Thyroid gland (tissue), 4 donors: ENCODE measurements at regions of chr7 and their contacts with region 1.

Region 1: DNA sequence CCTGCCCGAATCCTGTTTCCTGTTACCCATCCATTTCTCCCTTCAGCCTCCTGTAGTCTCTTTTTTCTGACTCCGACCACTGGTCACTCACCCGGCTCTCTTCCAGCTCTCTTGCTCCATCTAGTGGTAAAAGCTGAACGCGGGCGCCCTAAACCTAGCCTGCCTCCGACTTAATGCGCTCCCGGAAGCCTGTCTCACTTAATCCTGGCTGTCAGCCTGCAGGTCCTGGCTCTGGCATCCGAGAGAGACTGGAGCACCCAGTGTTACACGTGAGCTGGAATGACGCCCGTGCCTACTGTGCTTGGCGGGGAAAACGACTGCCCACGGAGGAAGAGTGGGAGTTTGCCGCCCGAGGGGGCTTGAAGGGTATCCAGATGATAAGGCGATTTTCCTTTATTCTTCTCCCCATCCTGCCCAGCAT is 10.3 kb downstream of the SUMF2 start:
- DNase-seq: peak; percentile 97
- H3K4me3 ChIP-seq: no peak overlapping the region
- H3K27ac ChIP-seq: peak overlapping the region in 2 of 3 donors; percentile 10 to 40
- H3K4me1 ChIP-seq: peaks cover 5 to 8% of the 10 kb centered on the region in 2 donors
- H3K27me3 ChIP-seq: no peaks in the 10 kb centered on the region
- CTCF ChIP-seq: peak; percentile 65 to 99 (median 94)
- POLR2A ChIP-seq: no peak

Region 2: DNA sequence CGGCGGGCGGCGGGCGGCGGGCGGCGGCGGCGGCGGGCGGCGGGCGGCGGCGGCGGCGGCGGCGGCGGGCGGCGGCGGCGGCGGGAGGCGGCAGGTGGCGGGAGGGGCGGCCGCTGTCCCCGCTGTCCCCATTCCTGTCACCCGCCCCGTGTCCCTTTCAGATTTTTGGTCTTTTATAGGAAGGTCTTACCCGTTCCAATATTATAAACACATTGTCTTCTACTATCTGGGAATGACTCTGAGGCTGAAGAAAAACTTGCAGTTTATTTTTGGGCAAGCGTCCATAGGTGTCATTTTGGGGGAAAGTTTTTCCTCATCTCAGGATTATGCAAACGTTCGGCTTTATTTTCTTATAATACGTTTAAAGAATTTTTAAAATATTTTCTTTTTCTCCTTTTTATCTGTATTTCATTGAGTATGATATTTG is 186.5 kb before region 1 on chr7:
- intact Hi-C with region 1: loop called (anchors 10 kb)
- DNase-seq: peak in 1 of 2 donors; percentile 8
- H3K4me3 ChIP-seq: peak overlapping the region in 2 of 3 donors; percentile 24 to 60
- H3K27ac ChIP-seq: peak overlapping the region; percentile 46 to 65 (median 49)
- H3K4me1 ChIP-seq: no peaks in the 10 kb centered on the region
- H3K27me3 ChIP-seq: no peaks in the 10 kb centered on the region
- CTCF ChIP-seq: no peak
- POLR2A ChIP-seq: no peak

Region 3: DNA sequence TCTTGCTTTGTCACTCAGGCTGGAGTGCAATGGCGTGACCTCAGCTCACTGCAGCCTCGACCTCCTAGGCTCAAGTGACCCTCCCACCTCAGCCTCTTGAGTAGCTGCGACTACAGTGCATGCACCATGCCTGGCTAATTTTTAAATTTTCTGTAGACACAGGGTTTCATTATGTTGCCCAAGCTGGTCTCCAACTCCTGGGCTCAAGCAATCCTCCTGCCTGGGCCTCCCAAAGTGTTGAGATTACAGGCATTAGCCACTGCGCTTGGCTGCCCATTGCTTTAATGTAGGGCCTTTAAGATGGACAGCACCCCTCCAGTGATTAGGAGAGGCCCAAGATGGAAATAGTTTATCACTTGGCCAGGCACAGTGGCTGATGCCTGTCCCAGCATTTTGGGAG is 70.6 kb before region 1 on chr7:
- intact Hi-C with region 1: loop called (anchors 2 kb)
- DNase-seq: no peak
- H3K4me3 ChIP-seq: no peak overlapping the region
- H3K27ac ChIP-seq: no peak overlapping the region
- H3K4me1 ChIP-seq: no peaks in the 10 kb centered on the region
- H3K27me3 ChIP-seq: no peaks in the 10 kb centered on the region
- CTCF ChIP-seq: no peak
- POLR2A ChIP-seq: no peak